Astrocyte of the cerebellum (primary cell): ENCODE measurements at regions of chr5 and their contacts with region 1.

Region 1: GRCh38 chr5:149621415-149622098 is 40.3 kb downstream of the ARHGEF37 start:
- DNase-seq: no peak
- H3K4me3 ChIP-seq: no peak overlapping the region
- CTCF ChIP-seq: no peak

Region 2: GRCh38 chr5:149667084-149667828 is 45.7 kb after region 1 on chr5:
- in situ Hi-C with region 1: loop called (anchors 5 kb)
- DNase-seq: no peak
- H3K4me3 ChIP-seq: no peak overlapping the region
- CTCF ChIP-seq: peak; percentile 76

Region 3: GRCh38 chr5:149702934-149703646 is 81.5 kb after region 1 on chr5:
- in situ Hi-C with region 1: no loop called
- DNase-seq: no peak
- H3K4me3 ChIP-seq: no peak overlapping the region
- CTCF ChIP-seq: no peak

Region 4: GRCh38 chr5:149809931-149810617 is 188.5 kb after region 1 on chr5:
- in situ Hi-C with region 1: loop called (anchors 5 kb)
- DNase-seq: no peak
- H3K4me3 ChIP-seq: no peak overlapping the region
- CTCF ChIP-seq: no peak

Region 5: GRCh38 chr5:150723845-150724244 is 1102.3 kb after region 1 on chr5:
- in situ Hi-C with region 1: no loop called
- DNase-seq: no peak
- H3K4me3 ChIP-seq: no peak overlapping the region
- CTCF ChIP-seq: no peak